Right lobe of liver (tissue), 6 donors: ENCODE measurements at regions of chr17 and their contacts with region 1.

Region 1: DNA sequence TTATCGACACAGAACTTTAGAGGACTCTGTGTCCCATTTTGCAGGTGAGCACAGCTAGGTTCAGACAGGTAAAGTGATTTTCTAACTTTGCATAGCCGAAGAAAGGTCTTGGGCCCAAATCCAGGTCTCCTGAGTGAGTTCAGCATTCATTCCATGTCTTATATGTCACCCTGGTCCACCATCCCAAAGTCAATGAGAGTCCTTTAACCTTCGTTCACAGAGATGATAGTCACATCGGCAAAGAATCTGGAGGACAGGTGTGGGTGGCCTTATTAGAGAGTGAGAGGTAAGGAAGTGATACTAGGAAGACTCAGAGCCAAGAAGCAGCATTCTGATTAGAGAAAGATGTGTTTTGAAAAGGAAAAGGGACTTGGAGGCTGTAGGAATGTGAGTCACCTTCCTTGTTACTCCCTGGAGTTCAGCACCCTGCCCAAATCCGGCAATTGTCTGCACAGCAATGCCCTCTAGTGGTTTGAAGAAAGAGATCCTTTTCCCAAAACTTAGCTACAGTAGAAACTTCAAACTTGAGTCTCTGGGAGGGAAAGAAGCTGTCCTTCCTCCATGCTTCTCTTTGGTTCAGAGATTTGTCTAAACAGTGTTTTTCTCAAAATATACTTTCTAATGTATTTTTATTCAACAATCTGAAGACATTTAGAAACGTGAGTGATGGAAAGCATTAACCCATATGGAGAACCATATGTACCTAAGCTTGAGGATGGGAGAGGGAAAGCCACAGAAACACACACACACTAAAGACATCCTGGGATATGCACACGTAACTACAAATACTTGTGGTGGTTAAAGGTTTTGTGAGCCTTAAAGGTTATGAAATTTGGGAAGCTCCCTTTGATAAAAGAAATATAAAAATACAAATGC is 96.4 kb upstream of the SHISA6 start:
- DNase-seq: peak in 1 of 3 donors; percentile 22
- ATAC-seq: peak; percentile 66 to 84 (median 80)
- H3K4me3 ChIP-seq: no peak overlapping the region
- H3K27ac ChIP-seq: no peak overlapping the region
- H3K4me1 ChIP-seq: no peaks in the 10 kb centered on the region
- H3K27me3 ChIP-seq: no peaks in the 10 kb centered on the region
- CTCF ChIP-seq: peak; percentile 65 to 74 (median 72)
- POLR2A ChIP-seq: no peak

Region 2: DNA sequence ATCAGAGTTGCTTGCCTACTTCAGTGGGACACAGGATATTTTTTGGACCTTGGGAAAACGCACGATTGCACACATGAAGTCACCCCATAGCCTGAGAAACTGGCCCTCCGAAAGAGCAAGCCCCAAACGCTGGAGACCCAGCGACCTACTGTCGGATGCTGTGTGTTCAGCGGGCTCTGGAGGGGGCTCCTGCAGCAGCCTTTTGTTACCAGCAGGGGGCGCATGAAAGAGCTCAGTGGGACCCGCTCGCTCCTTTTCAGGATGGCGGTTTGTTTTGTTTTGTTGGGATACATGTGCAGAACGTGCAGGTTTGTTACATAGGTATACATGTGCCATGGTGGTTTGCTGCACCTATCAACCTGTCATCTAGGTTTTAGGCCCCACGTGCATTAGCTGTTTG is 515.8 kb before region 1 on chr17:
- intact Hi-C with region 1: loop called in 1 of 2 experiments (anchors 10 kb)
- DNase-seq: no peak
- ATAC-seq: no peak
- H3K4me3 ChIP-seq: no peak overlapping the region
- H3K27ac ChIP-seq: no peak overlapping the region
- H3K4me1 ChIP-seq: no peaks in the 10 kb centered on the region
- H3K27me3 ChIP-seq: no peaks in the 10 kb centered on the region
- CTCF ChIP-seq: peak in 2 of 4 donors; percentile 22 to 28
- POLR2A ChIP-seq: no peak